ENCODE measurements at regions of chr2 and their contacts with region 1.

Region 1: DNA sequence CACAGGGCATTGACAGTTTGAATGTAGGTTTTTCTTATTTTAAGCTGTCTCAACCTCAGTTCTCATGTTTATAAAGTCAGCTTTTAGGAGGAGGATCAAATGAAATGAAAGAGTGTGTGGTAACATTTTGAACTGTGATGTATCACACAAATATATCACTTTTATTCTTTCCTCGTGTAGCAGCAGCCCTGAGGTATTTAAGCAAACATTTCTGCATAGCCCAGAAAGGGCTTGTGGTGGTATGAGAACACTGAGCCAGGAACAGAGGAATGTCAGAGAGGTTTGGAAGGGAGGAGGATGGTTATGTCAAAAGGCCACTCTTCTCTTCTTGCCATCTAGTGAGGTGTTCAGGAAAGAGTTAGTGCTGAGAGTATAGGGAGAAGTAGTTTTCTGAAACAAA is 150.2 kb downstream of the PARD3B start:
- DNase-seq: peak; percentile 16
- H3K4me3 ChIP-seq: no peak overlapping the region
- CTCF ChIP-seq: no peak

Region 2: DNA sequence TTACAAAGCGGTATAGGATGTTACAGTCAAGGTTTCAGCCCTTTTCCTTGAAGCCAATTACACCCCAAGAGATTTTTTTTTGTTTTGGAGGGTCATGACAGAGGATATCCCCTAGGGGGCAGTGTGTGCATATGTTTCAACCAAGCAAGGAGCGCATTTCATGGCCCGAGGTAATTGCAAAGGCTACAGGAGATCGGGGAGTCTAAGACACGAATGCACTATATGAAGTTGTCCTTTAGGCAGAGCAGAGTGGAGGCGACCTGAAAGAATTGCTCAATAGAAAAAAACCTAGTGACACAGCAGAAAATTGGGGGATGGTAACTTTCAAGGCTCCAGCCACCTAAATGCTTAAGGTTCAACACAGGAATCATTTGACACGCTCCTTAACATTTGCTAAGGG is 370.0 kb before region 1 on chr2:
- in situ Hi-C with region 1: loop called (anchors 5 kb)
- DNase-seq: peak; percentile 75
- H3K4me3 ChIP-seq: no peak overlapping the region
- CTCF ChIP-seq: peak; percentile 77

Region 3: DNA sequence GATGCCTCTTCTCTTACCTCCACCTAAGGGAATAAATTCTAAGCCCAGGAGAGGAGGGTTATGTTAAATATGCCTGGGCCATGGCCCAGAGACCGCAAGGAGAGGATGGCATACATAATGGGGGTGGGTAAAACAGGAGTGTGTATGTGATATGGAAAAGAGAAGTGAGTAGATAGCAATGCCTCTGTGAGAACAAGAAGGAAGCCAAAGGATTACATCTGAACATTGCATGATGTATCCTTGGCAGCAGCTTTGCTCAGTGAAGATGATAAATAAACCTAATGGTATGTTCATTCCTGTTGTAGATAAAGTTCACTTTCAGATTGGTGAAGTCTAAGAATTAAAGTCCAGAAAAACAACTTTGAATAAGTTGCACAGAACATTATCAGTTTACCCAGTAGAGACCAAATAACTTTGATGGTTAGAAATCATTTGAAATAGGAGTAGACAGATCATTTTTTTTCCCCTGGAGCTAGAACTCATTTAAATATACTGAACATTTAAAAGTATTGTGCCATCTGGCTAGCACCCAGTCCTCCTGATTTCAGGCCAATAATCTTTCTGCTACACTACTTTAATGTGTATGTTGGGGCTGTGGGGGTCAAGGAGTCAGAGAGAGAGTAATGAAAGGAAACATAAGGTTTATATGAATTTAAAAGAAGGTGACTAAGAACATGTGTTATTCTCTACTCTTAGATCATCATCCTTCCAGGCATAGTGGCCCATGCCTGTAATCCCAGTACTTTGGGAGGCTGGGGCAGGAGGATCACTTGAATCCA is 81.5 kb after region 1 on chr2:
- in situ Hi-C with region 1: loop called (anchors 5 kb)
- DNase-seq: peak; percentile 42
- H3K4me3 ChIP-seq: no peak overlapping the region
- CTCF ChIP-seq: no peak

Region 4: DNA sequence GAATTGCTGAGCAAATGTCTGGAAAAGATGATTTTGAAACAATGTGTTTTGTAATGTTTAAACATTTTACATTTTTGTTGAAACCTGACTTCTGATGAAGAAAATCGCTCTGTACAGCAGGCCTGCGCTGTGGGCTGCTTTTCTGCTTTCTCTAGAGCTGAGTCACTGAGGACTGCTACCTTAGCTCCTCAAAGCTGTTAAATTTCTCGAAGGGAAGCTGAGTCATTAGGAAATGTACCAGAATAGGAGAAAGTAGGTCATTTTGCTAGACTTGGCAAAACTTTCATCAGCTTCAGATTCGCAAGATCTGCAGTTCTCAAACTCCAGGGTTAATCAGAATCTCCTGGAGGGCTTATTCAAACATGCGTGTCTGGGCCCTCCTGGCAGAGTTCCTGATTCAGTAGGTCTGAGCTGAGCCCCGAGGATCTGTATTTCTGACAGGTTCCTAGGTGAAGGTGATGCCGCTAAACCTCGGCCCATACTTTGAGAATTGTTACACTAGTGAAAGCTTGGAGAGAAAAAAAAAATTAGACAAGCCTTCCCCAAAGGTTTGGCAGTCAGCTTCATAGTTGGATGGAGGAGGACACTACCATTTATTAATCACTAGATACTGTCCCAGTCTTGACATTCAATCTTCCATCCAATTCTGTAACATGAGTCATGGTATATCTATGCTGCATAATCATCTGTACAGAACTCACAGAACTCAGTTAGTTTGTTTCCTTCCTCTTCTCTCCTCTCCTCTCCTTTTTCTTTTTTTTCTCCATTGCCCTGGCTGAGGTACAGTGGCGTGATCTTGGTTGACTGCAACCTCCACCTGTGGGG is 147.4 kb after region 1 on chr2:
- in situ Hi-C with region 1: no loop called
- DNase-seq: peak; percentile 82
- H3K4me3 ChIP-seq: no peak overlapping the region
- CTCF ChIP-seq: no peak

Measured in astrocyte of the cerebellum (primary cell).